ENCODE measurements at regions of chrX and their contacts with region 1.

Region 1: DNA sequence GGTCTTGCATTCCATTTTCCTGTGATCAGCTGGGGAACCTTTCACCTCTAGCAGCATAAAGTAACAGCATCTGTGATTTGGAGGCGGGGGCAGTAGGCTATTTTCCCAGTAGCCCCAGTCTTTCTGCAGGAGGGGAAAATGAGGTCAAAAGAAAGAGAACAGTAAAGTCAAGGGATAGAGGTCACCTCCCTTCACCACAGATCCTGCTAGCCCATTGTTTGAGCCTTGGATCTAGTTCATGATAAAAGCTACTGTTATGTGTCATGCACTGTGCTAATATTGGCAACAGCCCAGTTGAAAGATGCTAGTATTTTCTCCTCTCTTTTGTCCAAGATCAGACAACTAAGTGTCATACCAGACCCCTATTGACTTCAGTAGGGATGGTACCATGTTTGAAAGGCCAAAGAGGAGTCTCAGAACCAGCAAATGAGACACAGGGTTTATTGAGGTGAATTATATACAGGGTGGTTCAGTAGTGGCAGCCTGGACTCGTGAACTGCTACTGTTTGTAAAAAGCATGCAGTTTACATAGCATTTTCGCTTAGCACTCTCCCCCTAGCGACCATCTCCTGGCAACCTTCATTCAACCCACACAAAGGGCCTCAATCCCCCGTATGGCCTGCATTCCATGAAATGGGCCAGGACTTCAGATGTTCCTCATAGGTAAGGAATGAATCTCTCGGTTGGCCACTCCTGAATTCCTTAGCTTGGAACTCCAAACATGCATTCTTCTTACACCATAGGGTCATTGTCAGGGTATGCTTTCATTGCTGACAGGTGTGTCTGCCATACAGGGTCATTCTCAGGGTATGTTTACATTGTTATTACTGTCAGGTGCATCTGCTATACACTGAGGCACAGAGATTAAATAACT is 170.1 kb upstream of the FRMPD4 start:
- DNase-seq: peak; percentile 66
- H3K4me3 Mint-ChIP-seq: peak overlapping the region; percentile 24
- H3K27ac Mint-ChIP-seq: peak overlapping the region; percentile 83
- H3K4me1 Mint-ChIP-seq: peaks cover 53% of the 10 kb centered on the region
- H3K27me3 Mint-ChIP-seq: no peaks in the 10 kb centered on the region
- CTCF ChIP-seq: no peak

Region 2: DNA sequence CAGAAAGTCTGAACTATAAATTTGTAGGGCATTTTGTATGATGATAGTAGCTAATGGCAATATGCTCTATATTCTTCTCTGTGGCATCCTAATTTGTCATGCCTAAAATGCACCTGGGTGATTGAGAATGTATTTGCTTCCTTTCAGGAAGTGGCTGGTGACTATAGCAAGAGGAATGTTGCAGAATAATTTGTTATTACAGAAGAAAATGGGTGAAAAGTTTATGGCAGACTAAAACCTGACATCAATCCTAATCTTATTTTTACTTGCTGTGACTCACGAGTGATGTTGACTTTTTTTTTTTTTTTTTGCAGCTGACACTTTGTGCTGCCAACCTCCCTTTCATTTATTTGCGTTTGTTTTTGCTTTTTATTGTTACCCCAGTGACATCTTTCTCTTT is 69.1 kb before region 1 on chrX:
- CTCF ChIA-PET with region 1: no interaction called
- intact Hi-C with region 1: loop called (anchors 5 kb)
- DNase-seq: peak; percentile 1
- H3K4me3 Mint-ChIP-seq: no peak overlapping the region
- H3K27ac Mint-ChIP-seq: peak overlapping the region; percentile 72
- H3K4me1 Mint-ChIP-seq: peaks cover 43% of the 10 kb centered on the region
- H3K27me3 Mint-ChIP-seq: no peaks in the 10 kb centered on the region
- CTCF ChIP-seq: no peak

Region 3: DNA sequence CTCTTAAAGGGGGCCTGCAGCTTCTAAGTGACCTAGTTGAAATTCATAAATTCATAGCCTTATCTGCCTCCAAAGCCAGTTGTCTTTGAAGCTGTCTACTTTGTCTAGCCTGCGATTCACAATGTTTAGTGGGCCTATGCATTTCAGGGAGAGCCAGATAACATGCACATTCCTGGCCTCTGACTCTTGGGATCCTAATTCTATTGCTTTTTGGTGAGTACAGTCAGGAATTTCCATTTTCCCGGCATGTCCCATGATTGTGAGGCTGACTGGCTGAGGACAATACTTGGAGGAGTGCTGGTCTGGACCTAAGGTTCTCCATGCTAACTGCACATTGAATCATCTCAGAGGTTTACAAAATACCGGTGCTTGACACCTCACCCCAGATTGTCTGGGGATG is 55.2 kb before region 1 on chrX:
- CTCF ChIA-PET with region 1: no interaction called
- intact Hi-C with region 1: no loop called
- DNase-seq: no peak
- H3K4me3 Mint-ChIP-seq: no peak overlapping the region
- H3K27ac Mint-ChIP-seq: no peak overlapping the region
- H3K4me1 Mint-ChIP-seq: peaks cover 3% of the 10 kb centered on the region
- H3K27me3 Mint-ChIP-seq: no peaks in the 10 kb centered on the region
- CTCF ChIP-seq: no peak

Region 4: DNA sequence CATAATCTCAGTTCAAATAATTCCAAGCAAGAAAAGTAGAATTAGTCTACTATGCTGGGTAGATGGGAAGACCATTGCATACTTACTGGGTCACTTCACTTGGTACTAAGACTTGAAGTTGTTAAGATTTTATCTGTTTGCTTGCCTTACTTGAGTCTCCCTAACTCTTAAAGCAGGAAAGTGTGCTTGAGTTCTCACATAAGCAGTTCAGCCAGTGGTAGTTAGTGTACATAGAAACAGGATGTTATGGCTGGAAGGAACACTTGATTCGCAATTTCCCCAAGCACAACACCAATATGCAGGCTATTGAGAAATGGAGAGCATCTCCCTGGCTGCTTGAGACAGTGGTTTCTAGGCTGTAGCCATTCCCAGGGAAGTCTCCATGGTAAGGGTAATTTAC is 34.1 kb before region 1 on chrX:
- CTCF ChIA-PET with region 1: no interaction called
- intact Hi-C with region 1: no loop called
- DNase-seq: no peak
- H3K4me3 Mint-ChIP-seq: no peak overlapping the region
- H3K27ac Mint-ChIP-seq: no peak overlapping the region
- H3K4me1 Mint-ChIP-seq: no peaks in the 10 kb centered on the region
- H3K27me3 Mint-ChIP-seq: no peaks in the 10 kb centered on the region
- CTCF ChIP-seq: no peak

Region 5: DNA sequence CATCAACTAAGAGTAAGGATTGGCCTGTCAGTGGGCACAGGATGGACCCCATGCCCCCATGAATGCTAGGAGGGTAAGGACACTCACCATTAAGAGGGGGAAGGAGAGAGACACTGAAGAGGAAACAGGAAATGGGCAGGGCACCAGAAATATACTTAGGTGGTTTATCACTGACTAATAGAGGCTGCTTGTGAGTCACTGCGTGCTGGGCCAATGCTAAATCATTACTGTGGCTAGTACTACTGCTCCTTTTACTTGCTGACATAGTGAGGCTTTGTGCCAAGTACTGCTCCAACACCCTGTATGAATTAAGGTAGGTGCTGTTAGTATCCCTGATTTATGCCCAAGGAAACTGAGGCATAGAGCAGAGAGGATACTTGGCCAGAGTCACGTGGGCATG is 39.7 kb after region 1 on chrX:
- CTCF ChIA-PET with region 1: interaction called, 4 read pairs
- intact Hi-C with region 1: loop called (anchors 5 kb)
- DNase-seq: peak; percentile 56
- H3K4me3 Mint-ChIP-seq: no peak overlapping the region
- H3K27ac Mint-ChIP-seq: peak overlapping the region; percentile 6
- H3K4me1 Mint-ChIP-seq: peaks cover 49% of the 10 kb centered on the region
- H3K27me3 Mint-ChIP-seq: no peaks in the 10 kb centered on the region
- CTCF ChIP-seq: no peak

Region 6: GRCh38 chrX:12282991-12283390 is 314.8 kb after region 1 on chrX:
- CTCF ChIA-PET with region 1: no interaction called
- intact Hi-C with region 1: no loop called
- DNase-seq: no peak
- H3K4me3 Mint-ChIP-seq: no peak overlapping the region
- H3K27ac Mint-ChIP-seq: no peak overlapping the region
- H3K4me1 Mint-ChIP-seq: no peaks in the 10 kb centered on the region
- H3K27me3 Mint-ChIP-seq: peaks cover 13% of the 10 kb centered on the region
- CTCF ChIP-seq: no peak

Measured in Calu3 (cell line).